Activated T-helper 1 cell treated with anti-CD3 and anti-CD28 coated beads, Interleukin-12 subunit alpha, Interleukin-12 subunit beta, Interleukin-2, Interleukin-4 antibody, amounts not matched to agents 30 ng/mL and 10 ng/mL and 1 ng/mL, durations not matched to agents 14 hours and 24 hours and 36 hours (primary cell): ENCODE measurements at regions of chr2 and their contacts with region 1.

Region 1: GRCh38 chr2:187581125-187581896 is 27.1 kb upstream of the TFPI start:
- DNase-seq: peak; percentile 5
- H3K4me3 Mint-ChIP-seq: no peak overlapping the region
- H3K27ac Mint-ChIP-seq: no peak overlapping the region
- H3K4me1 Mint-ChIP-seq: peaks cover 13% of the 10 kb centered on the region
- H3K27me3 Mint-ChIP-seq: peaks cover 2% of the 10 kb centered on the region

Region 2: GRCh38 chr2:186879312-186879711 is 702.0 kb before region 1 on chr2:
- intact Hi-C with region 1: no loop called
- DNase-seq: no peak
- H3K4me3 Mint-ChIP-seq: no peak overlapping the region
- H3K27ac Mint-ChIP-seq: no peak overlapping the region
- H3K4me1 Mint-ChIP-seq: no peaks in the 10 kb centered on the region
- H3K27me3 Mint-ChIP-seq: no peaks in the 10 kb centered on the region

Region 3: DNA sequence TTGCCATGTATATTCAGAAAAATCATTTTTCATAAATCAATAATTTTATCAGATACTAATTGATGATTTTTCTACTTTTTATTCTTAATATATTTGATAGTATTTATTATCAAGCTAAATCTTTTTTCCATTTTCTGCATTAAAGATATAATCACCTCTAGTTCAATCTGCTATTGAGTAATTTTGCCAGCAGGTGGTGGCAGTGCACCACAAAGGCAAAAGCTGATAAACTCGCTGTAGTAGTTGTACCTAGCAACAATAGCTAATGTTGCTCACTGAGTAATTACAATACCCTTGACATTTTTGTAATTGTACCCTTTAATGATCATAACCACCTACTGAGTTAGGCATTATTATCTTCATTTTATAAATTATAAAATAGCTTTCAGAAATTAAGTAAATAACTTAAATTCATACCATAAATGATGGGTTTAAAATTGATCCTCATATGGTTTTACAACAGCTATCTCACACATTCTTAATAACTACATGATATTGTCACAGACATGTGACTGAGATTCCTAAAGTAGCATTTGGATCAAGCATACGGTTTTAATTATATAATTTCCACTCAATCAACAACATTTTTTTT is 81.3 kb before region 1 on chr2:
- intact Hi-C with region 1: loop called (anchors 1 kb)
- DNase-seq: peak; percentile 14
- H3K4me3 Mint-ChIP-seq: no peak overlapping the region
- H3K27ac Mint-ChIP-seq: no peak overlapping the region
- H3K4me1 Mint-ChIP-seq: no peaks in the 10 kb centered on the region
- H3K27me3 Mint-ChIP-seq: peaks cover 5% of the 10 kb centered on the region

Region 4: DNA sequence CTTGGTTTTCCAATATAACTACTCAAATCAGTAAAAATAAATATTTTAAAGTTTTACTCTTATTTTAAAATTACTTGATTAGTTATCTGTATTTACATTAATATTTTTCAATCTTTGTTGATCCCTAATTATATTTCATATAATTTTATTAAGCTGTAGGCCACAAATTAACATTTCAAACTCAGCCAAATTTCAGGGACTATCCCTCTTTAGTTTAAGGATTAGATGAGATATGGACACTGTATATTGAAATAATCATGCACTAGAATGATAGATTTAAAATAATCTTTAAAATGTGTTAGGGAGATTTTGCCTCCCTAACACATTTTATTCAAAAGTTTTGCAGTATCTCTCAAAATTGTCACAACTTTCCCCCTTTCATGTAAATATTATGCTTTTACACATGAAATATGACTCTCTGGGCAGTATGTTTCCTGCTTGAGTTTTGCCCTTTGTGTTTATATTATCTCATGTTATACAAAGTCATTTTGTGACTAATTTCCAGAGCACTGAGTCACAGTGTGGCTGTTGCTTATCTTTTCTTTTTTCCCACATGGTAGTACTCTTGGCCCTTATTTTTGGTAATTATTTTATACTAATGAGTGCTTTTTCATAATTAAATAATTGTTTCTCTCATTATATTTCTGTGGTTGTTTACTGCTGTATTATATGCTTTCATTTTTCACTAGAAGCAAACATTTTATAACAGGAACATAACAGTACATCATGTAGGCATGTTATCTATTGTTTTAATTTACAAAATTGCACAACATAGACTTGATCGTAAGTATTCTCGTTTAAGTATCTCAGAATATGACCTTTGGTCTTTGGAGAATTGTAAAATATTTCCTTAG is 28.3 kb before region 1 on chr2:
- intact Hi-C with region 1: loop called (anchors 2 kb)
- DNase-seq: no peak
- H3K4me3 Mint-ChIP-seq: no peak overlapping the region
- H3K27ac Mint-ChIP-seq: no peak overlapping the region
- H3K4me1 Mint-ChIP-seq: peaks cover 13% of the 10 kb centered on the region
- H3K27me3 Mint-ChIP-seq: peaks cover 11% of the 10 kb centered on the region

Region 5: DNA sequence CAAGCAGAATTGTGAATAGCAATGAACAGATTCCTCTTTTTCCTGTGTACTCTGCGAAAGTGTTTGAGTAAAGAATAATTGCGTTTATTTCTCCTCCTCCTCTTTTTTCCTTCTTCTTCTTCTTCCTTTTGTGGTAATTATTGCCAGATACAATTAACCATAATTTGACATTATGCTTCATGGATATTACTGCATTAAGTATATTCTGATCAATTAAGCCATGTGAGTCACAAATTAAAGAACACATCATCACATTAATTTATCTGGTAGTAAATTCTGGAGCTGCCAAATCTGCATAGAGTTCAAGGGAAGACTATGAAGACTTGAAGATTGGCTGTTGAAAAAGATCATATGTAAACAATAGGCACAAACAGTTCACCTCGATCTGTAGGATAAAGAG is 45.8 kb after region 1 on chr2:
- intact Hi-C with region 1: no loop called
- DNase-seq: no peak
- H3K4me3 Mint-ChIP-seq: no peak overlapping the region
- H3K27ac Mint-ChIP-seq: peak overlapping the region; percentile 18
- H3K4me1 Mint-ChIP-seq: no peaks in the 10 kb centered on the region
- H3K27me3 Mint-ChIP-seq: no peaks in the 10 kb centered on the region

Region 6: GRCh38 chr2:187842978-187843847 is 261.9 kb after region 1 on chr2:
- intact Hi-C with region 1: loop called (anchors 1 kb)
- DNase-seq: no peak
- H3K4me3 Mint-ChIP-seq: no peak overlapping the region
- H3K27ac Mint-ChIP-seq: no peak overlapping the region
- H3K4me1 Mint-ChIP-seq: no peaks in the 10 kb centered on the region
- H3K27me3 Mint-ChIP-seq: no peaks in the 10 kb centered on the region

Region 7: GRCh38 chr2:188978291-188979081 is 1397.2 kb after region 1 on chr2:
- intact Hi-C with region 1: loop called (anchors 2 kb)
- DNase-seq: no peak
- H3K4me3 Mint-ChIP-seq: peak overlapping the region; percentile 5
- H3K27ac Mint-ChIP-seq: peak overlapping the region; percentile 77
- H3K4me1 Mint-ChIP-seq: peaks cover 17% of the 10 kb centered on the region
- H3K27me3 Mint-ChIP-seq: peaks cover 2% of the 10 kb centered on the region